Caco-2 (cell line): ENCODE measurements at regions of chr22 and their contacts with region 1.

Region 1: DNA sequence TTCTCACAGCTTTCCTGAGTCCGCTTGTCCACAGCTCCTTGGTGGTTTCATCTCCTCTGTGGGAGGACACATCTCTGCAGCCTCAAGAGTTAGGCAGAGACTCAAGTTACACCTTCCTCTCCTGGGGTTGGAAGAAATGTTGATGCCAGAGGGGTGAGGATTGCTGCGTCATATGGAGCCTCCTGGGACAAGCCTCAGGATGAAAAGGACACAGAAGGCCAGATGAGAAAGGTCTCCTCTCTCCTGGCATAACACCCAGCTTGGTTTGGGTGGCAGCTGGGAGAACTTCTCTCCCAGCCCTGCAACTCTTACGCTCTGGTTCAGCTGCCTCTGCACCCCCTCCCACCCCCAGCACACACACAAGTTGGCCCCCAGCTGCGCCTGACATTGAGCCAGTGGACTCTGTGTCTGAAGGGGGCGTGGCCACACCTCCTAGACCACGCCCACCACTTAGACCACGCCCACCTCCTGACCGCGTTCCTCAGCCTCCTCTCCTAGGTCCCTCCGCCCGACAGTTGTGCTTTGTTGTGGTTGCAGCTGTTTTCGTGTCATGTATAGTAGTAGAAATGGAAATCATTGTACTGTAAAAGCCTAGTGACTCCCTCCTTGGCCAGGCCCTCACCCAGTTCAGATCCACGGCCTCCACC is 11.7 kb downstream of the RASD2 start:
- DNase-seq: peak in 1 of 2 experiments; percentile 59
- H3K4me3 ChIP-seq: no peak overlapping the region
- H3K4me3 Mint-ChIP-seq: no peak overlapping the region
- H3K27ac Mint-ChIP-seq: no peak overlapping the region
- H3K4me1 ChIP-seq: no peaks in the 10 kb centered on the region
- H3K4me1 Mint-ChIP-seq: no peaks in the 10 kb centered on the region
- H3K27me3 ChIP-seq: no peaks in the 10 kb centered on the region; the same call in 1 of the 2 replicates
- H3K27me3 Mint-ChIP-seq: no peaks in the 10 kb centered on the region
- CTCF ChIP-seq: no peak

Region 2: GRCh38 chr22:35568751-35569725 is 16.7 kb after region 1 on chr22:
- CTCF ChIA-PET with region 1: interaction called, 10 read pairs
- POLR2A ChIA-PET with region 1: interaction called, 6 read pairs
- intact Hi-C with region 1: no loop called
- DNase-seq: no peak
- H3K4me3 ChIP-seq: no peak overlapping the region
- H3K4me3 Mint-ChIP-seq: no peak overlapping the region
- H3K27ac Mint-ChIP-seq: no peak overlapping the region
- H3K4me1 ChIP-seq: no peaks in the 10 kb centered on the region
- H3K4me1 Mint-ChIP-seq: peaks cover 11% of the 10 kb centered on the region
- H3K27me3 ChIP-seq: no peaks in the 10 kb centered on the region
- H3K27me3 Mint-ChIP-seq: no peaks in the 10 kb centered on the region
- CTCF ChIP-seq: no peak